Activated naive CD4-positive, alpha-beta T cell treated with anti-CD3 and anti-CD28 coated beads for 36 hours (primary cell): ENCODE measurements at regions of chr9 and their contacts with region 1.

Region 1: DNA sequence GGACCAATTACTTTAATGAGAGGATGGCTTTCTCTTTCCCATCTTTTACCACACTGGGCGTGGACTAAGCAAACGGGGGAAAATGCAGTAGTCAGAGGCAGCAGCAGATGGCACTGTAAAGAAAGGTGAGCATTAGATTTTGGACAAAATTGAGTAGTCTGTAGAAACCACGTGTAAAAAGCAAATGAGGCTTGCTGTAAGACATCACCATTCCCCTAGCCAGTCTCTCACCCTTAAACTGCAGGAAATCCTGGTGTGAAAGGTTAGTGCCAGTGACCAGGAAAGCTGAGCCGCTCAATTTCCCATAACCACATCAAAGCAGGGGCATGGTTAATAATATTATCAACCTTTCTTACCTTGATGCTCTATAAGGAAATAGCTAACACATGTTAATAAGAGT is 31.8 kb downstream of the SPATA31C2 start:
- DNase-seq: peak; percentile 34
- H3K4me3 Mint-ChIP-seq: no peak overlapping the region
- H3K27ac Mint-ChIP-seq: no peak overlapping the region
- H3K4me1 Mint-ChIP-seq: no peaks in the 10 kb centered on the region
- H3K27me3 Mint-ChIP-seq: peaks cover 28% of the 10 kb centered on the region

Region 2: DNA sequence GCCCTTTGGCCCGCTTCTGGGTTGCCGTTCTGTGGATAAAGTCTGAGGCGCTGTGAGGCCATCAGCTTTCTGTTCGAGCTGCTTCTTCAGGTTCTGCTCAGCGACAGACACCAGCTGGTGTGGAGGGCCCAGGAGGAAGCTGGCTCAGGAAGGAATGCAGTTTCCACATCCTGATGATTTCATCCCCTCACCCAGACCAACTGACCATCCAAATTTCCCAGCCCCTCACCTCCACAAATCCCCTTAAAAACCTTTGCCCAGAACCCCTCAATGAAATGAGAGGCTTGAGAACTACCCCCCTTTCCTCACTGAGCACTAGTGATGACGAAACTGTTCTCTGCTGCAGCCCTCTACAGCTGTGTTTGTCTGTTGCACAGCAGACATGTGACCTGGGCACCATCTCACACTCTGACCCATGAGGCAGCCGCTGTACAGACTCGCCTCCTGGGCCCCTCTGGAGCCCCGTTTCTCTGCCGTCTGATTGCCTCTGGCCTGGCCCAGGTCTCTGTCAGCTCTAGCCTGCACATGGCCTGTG is 13.6 kb before region 1 on chr9:
- CTCF ChIA-PET with region 1: no interaction called
- intact Hi-C with region 1: no loop called
- DNase-seq: no peak
- H3K4me3 Mint-ChIP-seq: no peak overlapping the region
- H3K27ac Mint-ChIP-seq: no peak overlapping the region
- H3K4me1 Mint-ChIP-seq: no peaks in the 10 kb centered on the region
- H3K27me3 Mint-ChIP-seq: no peaks in the 10 kb centered on the region

Region 3: DNA sequence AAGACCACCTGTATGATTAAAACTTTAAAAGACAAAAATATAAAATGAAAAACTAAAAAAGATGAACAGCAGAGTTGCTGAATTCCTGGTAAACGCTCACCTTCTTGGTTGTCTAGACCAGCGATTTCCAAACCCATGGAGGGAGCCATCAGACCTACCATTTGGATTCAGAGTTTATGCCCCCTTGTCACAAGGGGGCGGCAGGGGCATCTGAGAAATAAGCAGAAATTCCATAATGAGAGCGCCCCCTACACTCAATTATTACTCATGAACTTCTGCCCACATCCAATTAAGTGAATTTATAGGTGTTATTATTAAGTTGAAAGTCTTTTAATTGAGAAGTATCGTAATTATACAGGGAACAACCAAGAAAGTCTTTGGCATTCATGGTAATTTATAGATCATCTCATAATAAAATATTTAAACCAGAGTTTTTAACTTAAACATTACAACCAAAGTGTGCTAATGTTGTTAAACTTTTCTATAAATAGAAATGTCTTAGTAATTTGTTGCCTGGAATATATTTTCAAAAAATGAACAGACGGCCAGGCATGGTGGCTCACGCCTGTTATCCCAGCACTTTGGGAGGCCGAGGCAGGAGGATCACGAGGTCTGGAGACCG is 67.0 kb after region 1 on chr9:
- CTCF ChIA-PET with region 1: no interaction called
- intact Hi-C with region 1: loop called (anchors 10 kb)
- DNase-seq: peak; percentile 75
- H3K4me3 Mint-ChIP-seq: no peak overlapping the region
- H3K27ac Mint-ChIP-seq: no peak overlapping the region
- H3K4me1 Mint-ChIP-seq: peaks cover 4% of the 10 kb centered on the region
- H3K27me3 Mint-ChIP-seq: peaks cover 6% of the 10 kb centered on the region

Region 4: DNA sequence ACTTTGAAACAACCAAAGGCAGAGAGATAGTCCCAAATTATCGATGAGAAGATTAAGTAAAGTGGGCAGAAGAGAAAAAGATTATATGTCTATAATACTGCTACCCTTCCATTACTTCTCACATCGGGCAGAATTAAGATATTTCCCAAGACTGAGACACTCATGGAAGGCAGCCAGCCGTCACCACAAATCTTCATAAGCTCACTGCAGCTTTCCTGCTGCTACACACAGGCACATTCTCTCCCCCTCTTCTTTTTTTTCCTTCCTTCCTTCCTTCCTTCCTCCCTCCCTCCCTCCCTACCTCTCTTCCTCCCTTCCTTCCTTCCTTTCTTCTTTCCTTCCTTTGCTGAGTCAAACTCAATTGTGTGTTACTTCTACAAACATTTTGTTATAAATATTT is 90.5 kb after region 1 on chr9:
- CTCF ChIA-PET with region 1: no interaction called
- intact Hi-C with region 1: no loop called
- DNase-seq: no peak
- H3K4me3 Mint-ChIP-seq: no peak overlapping the region
- H3K27ac Mint-ChIP-seq: no peak overlapping the region
- H3K4me1 Mint-ChIP-seq: peaks cover 3% of the 10 kb centered on the region
- H3K27me3 Mint-ChIP-seq: peaks cover 15% of the 10 kb centered on the region